HEK293 (cell line): ENCODE measurements at regions of chr12 and their contacts with region 1.

Region 1: DNA sequence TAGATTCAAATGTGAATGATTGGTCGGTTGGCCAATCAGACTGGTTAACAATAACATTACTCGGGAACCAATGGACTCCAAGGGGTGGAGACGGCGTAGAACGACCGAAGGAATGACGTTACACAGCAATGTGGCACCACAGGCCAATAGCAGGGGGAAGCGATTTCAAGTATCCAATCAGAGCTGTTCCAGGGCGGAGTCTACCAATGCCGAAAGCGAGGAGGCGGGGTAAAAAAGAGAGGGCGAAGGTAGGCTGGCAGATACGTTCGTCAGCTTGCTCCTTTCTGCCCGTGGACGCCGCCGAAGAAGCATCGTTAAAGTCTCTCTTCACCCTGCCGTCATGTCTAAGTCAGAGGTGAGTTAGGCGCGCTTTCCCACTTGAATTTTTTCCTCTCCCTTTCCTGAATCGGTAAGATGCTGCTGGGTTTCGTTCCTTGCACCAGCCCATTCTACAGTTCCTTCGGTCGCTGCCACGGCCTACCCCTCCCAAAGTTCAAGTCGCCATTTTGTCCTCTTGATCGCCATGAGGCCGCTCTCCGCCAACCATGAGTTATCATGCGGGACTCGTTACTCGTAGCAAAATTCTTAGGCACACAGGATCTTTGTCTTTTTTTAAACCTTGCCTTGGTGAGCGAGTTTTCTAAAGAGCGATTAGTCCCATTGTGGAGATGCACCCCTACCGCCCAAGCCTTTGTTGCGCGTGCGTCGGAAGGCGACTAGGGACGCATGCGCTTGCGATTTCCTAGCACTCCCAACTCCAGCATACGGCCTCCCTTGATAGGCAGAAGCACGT is at the start of gene HNRNPA1:
- H3K4me3 ChIP-seq: peak within 1 kb of the TSS; percentile 99
- H3K27ac ChIP-seq: peak within 1 kb of the TSS; percentile 94
- H3K4me1 ChIP-seq: peaks cover 5% of the 10 kb centered on the region
- CTCF ChIP-seq: no peak; the same call in 1 of the 2 replicates

Region 2: DNA sequence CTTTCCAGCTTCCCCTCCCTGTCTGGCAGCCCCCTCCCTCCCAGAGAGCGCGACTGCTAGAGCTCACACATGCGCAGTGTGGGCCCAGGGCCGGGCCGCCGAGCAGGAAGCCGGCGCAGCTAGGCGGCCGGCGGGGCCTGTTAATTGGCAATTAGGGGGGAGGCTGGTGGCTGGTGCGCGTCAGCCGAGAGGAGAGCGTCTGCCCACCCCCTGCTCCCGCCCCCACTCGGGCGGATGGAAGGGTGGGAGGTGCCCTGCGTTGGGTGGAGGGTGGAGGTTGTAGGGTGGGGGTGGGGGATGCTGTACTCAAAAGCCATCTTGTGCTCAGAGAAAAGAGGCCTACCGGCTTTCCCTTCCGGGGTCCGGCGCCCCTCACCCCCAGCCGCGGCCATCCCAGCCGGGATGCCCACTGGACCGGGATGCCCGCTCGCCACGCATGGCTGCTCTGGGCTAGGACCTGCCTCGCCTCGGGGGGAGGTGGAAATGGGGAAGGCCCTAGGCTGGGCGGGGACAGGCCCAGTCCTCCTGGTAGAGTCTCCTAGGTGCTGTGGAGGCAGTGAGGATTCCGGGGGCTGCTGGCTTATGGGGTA is 262.7 kb before region 1 on chr12:
- CTCF ChIA-PET with region 1: no interaction called
- POLR2A ChIA-PET with region 1: interaction called, 22 read pairs
- H3K4me3 ChIP-seq: peak overlapping the region; percentile 81
- H3K27ac ChIP-seq: peak overlapping the region; percentile 100
- H3K4me1 ChIP-seq: peaks cover 49% of the 10 kb centered on the region
- CTCF ChIP-seq: no peak

Region 3: GRCh38 chr12:54207484-54208294 is 73.0 kb before region 1 on chr12:
- CTCF ChIA-PET with region 1: no interaction called
- POLR2A ChIA-PET with region 1: no interaction called
- H3K4me3 ChIP-seq: no peak overlapping the region
- H3K27ac ChIP-seq: 0 out of 2 replicates have a peak overlapping the region, but pooled peaks have one; percentile 13
- H3K4me1 ChIP-seq: no peaks in the 10 kb centered on the region
- CTCF ChIP-seq: peak; percentile 89

Region 4: DNA sequence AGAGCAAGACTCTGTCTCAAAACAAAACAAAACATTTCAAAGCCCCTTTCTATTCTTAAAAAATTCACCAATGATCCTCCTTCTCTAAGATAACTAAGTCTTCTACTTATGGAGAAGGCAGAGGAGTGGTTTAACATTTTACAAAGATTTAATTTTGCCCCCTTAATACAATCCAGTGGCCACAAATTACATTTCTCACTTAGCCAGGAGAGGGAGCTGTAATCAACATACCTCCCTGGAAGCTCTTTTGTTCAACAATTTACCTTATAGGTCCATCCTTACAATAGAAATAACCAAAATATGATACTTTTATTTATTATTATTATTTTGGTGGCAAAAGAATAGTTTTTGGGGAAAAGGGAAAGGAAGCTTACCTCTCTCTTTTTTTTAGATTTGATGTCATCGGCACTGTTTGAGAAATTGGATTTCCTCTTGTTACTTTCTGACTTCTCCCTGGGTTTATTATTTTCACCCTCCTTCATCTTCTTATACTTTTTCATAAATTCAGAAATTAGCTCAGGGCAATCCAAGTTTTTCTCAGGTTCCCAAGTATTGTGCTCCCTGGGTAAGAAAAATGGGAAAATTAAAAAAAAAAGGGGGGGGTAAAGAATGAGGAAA is 28.9 kb before region 1 on chr12:
- CTCF ChIA-PET with region 1: interaction called, 27 read pairs
- POLR2A ChIA-PET with region 1: interaction called, 113 read pairs
- H3K4me3 ChIP-seq: no peak overlapping the region
- H3K27ac ChIP-seq: no peak overlapping the region
- H3K4me1 ChIP-seq: no peaks in the 10 kb centered on the region
- CTCF ChIP-seq: no peak

Region 5: GRCh38 chr12:54294152-54294952 is 13.7 kb after region 1 on chr12:
- CTCF ChIA-PET with region 1: interaction called, 9 read pairs
- POLR2A ChIA-PET with region 1: interaction called, 26 read pairs
- H3K4me3 ChIP-seq: no peak overlapping the region
- H3K27ac ChIP-seq: no peak overlapping the region
- H3K4me1 ChIP-seq: no peaks in the 10 kb centered on the region
- CTCF ChIP-seq: peak; percentile 69

Region 6: DNA sequence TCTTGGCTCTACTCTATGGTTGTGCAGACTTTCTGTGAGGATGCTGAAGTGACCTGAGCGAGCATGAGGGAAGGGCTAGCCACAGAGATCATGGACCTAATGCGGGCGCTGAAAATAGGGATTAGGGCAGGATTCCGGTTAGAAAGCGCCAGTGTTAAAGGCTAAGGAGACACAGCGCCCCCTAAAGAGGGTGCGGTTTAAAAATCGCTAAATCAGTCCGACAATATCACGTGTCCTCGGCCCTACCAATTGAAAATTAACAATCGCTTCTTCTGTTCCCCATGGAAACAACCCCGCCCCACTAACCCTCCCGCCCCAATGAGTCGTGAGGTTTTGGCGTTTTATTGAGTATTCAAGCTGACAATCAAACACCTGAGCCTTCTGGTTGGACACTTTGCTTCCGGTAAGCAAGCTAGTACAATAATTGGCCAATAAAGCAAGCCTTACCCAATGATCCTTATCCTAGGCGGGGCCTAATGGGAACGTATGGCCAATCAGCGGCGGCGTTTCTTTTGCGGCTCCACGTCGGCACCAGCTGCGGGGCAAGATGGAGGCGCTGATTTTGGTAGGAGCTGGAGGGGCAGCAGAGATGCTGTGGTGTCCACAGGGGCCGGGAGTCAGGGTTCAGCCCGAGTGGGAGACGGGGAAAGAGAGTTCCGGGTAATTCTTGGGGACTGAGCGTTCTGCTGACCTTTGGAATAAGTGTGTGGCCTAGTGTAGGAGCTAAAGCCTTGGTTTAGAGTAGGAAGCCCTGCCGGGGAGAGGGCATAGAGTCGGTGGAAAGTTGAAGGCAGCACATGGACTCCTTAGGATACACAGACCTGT is 44.2 kb after region 1 on chr12 and contains the start of gene COPZ1:
- CTCF ChIA-PET with region 1: interaction called, 14 read pairs
- POLR2A ChIA-PET with region 1: interaction called, 47 read pairs
- H3K4me3 ChIP-seq: peak within 1 kb of the TSS; percentile 88
- H3K27ac ChIP-seq: peak within 1 kb of the TSS; percentile 70
- H3K4me1 ChIP-seq: no peaks in the 10 kb centered on the region; the same call in 1 of the 2 replicates
- CTCF ChIP-seq: peak; percentile 84

Region 7: DNA sequence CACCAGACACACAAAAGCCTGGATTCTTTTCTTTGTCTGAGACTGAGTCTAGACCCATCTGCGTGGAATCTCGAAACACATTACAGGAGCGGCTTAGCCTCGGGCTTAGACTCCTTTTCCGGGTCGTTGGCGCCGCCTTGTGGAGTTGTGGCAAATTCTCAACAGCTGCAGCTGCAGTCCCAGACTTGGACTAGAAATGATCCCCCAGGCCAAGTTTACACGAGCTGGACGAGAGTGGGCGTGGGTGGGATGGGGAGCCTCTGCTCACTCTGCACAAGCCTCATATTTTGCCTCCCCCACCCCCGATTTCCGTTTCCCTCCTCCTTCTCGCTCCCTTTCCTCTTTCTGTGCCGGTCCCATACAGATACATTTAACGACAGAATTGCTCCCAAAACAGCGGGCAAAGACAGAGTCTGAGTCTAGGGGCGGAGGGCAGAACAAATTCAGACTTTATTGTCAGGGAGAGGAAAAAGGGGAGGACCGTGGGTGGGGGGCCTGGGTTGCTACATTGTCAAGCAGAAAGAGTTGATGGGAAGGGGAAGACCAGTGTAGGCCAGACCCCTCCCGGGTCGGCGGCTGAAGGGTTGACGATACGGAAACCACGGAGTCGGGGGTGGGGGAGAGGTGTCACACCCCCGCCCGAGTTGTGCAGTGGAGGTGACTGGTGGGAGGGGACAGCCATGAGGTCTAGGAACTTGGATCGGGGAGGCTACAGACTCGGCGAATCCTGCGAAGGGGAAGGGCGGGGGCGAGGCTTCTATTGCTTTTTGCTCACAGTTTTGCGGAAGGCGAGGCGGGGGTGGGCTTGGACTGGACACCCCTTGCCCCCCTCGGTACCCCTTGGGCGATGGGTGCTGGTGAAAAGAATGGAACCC is 88.3 kb after region 1 on chr12:
- CTCF ChIA-PET with region 1: interaction called, 5 read pairs
- POLR2A ChIA-PET with region 1: interaction called, 10 read pairs
- H3K4me3 ChIP-seq: no peak overlapping the region
- H3K27ac ChIP-seq: no peak overlapping the region
- H3K4me1 ChIP-seq: peaks cover 10% of the 10 kb centered on the region
- CTCF ChIP-seq: peak; percentile 79